Activated B cell treated with CpG ODN at 0.5 μM for 24 hours (primary cell): ENCODE measurements at regions of chr1 and their contacts with region 1.

Region 1: GRCh38 chr1:111270781-111271463 is 19.7 kb upstream of the CHIA start:
- DNase-seq: no peak
- ATAC-seq: peak; percentile 21
- H3K4me3 Mint-ChIP-seq: peak overlapping the region; percentile 73
- H3K27ac Mint-ChIP-seq: no peak overlapping the region
- H3K4me1 Mint-ChIP-seq: peaks cover 25% of the 10 kb centered on the region
- H3K27me3 Mint-ChIP-seq: peaks cover 38% of the 10 kb centered on the region
- CTCF ChIP-seq: no peak

Region 2: GRCh38 chr1:110990536-110990935 is 280.4 kb before region 1 on chr1:
- CTCF ChIA-PET with region 1: no interaction called
- POLR2A ChIA-PET with region 1: no interaction called
- intact Hi-C with region 1: no loop called
- DNase-seq: no peak
- ATAC-seq: no peak
- H3K4me3 Mint-ChIP-seq: no peak overlapping the region
- H3K27ac Mint-ChIP-seq: no peak overlapping the region
- H3K4me1 Mint-ChIP-seq: no peaks in the 10 kb centered on the region
- H3K27me3 Mint-ChIP-seq: peaks cover 5% of the 10 kb centered on the region
- CTCF ChIP-seq: no peak

Region 3: GRCh38 chr1:111285879-111286278 is 15.0 kb after region 1 on chr1:
- CTCF ChIA-PET with region 1: no interaction called
- POLR2A ChIA-PET with region 1: no interaction called
- intact Hi-C with region 1: loop called (anchors 2 kb)
- DNase-seq: no peak
- ATAC-seq: no peak
- H3K4me3 Mint-ChIP-seq: no peak overlapping the region
- H3K27ac Mint-ChIP-seq: no peak overlapping the region
- H3K4me1 Mint-ChIP-seq: no peaks in the 10 kb centered on the region
- H3K27me3 Mint-ChIP-seq: no peaks in the 10 kb centered on the region
- CTCF ChIP-seq: no peak

Region 4: GRCh38 chr1:111497592-111497991 is 226.7 kb after region 1 on chr1:
- CTCF ChIA-PET with region 1: no interaction called
- POLR2A ChIA-PET with region 1: no interaction called
- intact Hi-C with region 1: no loop called
- DNase-seq: no peak
- ATAC-seq: peak; percentile 77
- H3K4me3 Mint-ChIP-seq: no peak overlapping the region
- H3K27ac Mint-ChIP-seq: no peak overlapping the region
- H3K4me1 Mint-ChIP-seq: peaks cover 19% of the 10 kb centered on the region
- H3K27me3 Mint-ChIP-seq: no peaks in the 10 kb centered on the region
- CTCF ChIP-seq: no peak